ENCODE measurements at regions of chr16 and their contacts with region 1.

Region 1: DNA sequence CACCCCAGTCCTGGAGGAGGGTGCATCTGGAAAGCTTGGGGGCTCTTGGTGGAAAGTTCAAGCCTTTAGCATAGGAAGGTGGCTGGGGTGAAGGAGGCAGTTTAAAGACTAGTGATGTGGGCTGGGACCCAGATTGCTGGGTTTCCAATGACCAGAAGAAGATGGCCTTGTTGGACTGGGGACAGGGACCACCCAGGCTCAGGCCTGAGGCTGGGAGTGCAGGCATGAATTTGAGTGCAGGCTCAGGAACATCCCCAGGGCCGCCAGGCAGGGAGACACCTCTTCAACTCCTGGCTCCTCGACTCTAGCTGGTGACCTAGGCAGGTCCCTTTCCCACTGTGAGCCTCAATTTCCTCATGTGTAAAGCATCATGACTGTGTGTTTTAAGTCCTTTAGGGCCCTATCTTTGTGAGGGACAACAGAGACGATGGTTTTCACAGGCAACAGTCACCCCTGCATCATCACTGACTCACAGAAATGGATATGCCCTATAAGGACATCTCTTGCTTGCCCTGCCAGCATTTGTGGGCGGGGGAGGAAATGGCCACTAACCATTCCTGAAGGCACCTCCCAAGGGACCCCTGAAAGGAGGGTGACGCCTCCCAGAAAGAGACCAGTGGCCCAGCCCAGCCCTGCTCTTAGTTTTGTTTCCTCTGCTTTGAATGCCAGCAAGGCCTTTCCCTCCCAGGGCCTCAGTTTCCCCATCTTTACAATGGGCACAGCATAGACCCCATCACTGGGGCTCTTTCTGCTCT is 11.1 kb downstream of the NLRC5 start:
- DNase-seq: peak; percentile 82
- ATAC-seq: peak; percentile 89
- H3K4me3 Mint-ChIP-seq: peak overlapping the region; percentile 59
- H3K27ac Mint-ChIP-seq: peak overlapping the region; percentile 98
- H3K4me1 Mint-ChIP-seq: peaks cover 92% of the 10 kb centered on the region
- H3K27me3 Mint-ChIP-seq: no peaks in the 10 kb centered on the region

Region 2: DNA sequence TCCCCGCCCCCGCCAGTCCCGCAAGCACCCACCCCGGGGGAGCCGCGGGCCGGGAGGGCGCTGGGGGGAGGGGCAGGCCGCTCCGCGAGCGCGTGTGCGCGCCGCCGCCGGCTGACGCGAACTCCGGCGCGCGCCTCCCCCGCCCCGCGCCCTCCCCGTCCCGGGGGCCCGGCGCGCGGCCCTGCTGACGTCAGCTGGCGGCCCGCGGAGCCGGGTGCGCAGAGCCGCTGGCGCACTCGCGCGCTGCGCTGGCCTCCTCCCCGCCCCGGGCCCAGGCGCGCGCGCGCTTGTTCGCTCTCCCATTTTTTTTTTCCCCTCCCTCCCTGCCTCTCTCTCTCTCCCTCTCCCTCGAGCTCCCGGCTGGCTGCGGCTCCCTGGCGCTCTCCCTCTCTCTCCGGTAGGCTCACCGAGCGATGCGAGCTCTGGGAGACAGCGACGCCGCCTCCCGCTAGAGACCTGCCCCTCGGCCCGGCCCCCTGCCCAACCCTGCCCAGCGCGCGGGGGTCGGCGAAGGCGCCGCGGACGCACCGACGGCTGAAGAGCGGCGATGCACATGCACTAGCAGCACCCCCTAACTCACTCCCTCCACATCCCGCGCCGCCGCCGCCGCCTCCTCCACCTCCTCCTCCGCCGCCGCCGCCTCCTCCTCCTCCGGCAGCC is 809.2 kb before region 1 on chr16 and contains the start of gene GNAO1:
- CTCF ChIA-PET with region 1: no interaction called
- POLR2A ChIA-PET with region 1: no interaction called
- intact Hi-C with region 1: loop called in 1 of 2 experiments (anchors 10 kb)
- DNase-seq: peak; percentile 79
- ATAC-seq: peak; percentile 73
- H3K4me3 Mint-ChIP-seq: peak within 1 kb of the TSS; percentile 69
- H3K27ac Mint-ChIP-seq: no peak within 1 kb of the TSS
- H3K4me1 Mint-ChIP-seq: peaks cover 31% of the 10 kb centered on the region
- H3K27me3 Mint-ChIP-seq: peaks cover 60% of the 10 kb centered on the region
- total RNA-seq, gene GNAO1: 1.5 to 2.3 TPM

Region 3: DNA sequence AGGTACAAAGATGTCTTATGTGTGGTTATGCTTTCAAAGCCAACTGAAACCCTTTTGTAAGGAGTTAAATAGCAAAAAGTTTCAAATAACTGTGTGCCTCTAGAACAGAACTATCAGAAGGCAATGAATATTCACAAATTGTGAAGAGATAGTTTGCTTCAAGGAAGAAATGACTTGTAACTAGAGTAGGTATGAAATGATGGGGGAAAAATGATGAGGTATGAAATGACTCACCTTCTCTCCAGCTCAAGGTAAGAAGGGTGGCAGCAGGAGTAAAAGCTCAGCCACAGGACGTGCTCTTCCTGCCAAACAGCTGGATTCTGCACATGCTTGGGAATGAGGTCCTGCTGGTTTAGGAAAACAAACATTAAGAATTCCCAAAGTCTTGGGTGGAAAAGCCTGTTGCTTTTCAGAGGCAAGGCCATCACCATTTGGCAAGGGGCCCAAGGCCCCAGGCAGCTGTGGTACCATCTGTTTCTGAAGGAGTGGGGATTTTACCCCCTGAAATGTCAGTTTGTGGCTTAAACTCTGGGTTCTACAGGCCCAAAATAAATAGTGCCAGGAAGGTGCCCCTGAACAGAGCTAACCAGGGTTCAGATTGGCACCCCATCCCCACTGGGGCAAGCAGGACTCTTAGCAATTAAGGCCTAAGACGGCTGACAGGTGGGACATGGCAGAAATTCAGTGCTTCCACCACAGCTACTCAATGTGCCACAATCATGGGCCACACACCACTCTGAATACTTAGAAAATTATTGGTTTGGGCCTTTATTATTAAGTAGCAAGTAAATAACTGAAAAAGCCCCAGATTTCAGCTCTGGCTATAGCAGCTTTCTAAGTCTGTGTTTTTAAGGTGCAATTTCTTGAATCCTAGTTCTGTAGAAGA is 55.3 kb before region 1 on chr16:
- CTCF ChIA-PET with region 1: no interaction called
- POLR2A ChIA-PET with region 1: no interaction called
- intact Hi-C with region 1: no loop called
- DNase-seq: peak; percentile 61
- ATAC-seq: peak; percentile 79
- H3K4me3 Mint-ChIP-seq: peak overlapping the region; percentile 51
- H3K27ac Mint-ChIP-seq: peak overlapping the region; percentile 91
- H3K4me1 Mint-ChIP-seq: peaks cover 63% of the 10 kb centered on the region
- H3K27me3 Mint-ChIP-seq: no peaks in the 10 kb centered on the region

Region 4: GRCh38 chr16:57213462-57213861 is 213.0 kb after region 1 on chr16:
- CTCF ChIA-PET with region 1: no interaction called
- POLR2A ChIA-PET with region 1: no interaction called
- intact Hi-C with region 1: no loop called
- DNase-seq: no peak
- ATAC-seq: no peak
- H3K4me3 Mint-ChIP-seq: no peak overlapping the region
- H3K27ac Mint-ChIP-seq: peak overlapping the region; percentile 13
- H3K4me1 Mint-ChIP-seq: no peaks in the 10 kb centered on the region
- H3K27me3 Mint-ChIP-seq: no peaks in the 10 kb centered on the region